ENCODE measurements at regions of chr1 and their contacts with region 1.

Region 1: GRCh38 chr1:112369392-112370285 is 26.4 kb upstream of the CTTNBP2NL start:
- DNase-seq: peak; percentile 88
- H3K4me3 Mint-ChIP-seq: no peak overlapping the region
- H3K27ac Mint-ChIP-seq: no peak overlapping the region
- H3K4me1 Mint-ChIP-seq: no peaks in the 10 kb centered on the region
- H3K27me3 Mint-ChIP-seq: peaks cover 50% of the 10 kb centered on the region

Region 2: DNA sequence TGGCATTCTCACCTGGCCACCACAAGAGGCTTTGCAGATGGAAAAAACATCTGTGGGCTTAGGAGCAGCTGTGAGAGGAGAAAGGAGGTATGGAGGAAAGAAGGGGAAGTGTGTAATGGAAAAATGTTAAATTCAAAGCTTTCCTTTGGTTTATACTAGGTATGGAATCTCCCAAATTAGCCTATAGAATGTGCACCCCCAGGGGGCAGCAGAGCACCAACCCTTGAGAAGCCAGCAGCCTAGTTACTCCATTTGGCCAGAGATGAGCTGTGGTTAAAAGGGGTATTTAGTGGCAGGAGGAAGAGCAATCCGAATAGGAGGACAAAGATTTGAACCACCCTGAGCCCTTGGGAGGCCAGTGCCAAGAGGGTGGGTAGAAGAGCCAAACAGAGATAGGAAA is 71.1 kb before region 1 on chr1:
- CTCF ChIA-PET with region 1: interaction called, 44 read pairs
- DNase-seq: peak; percentile 69
- H3K4me3 Mint-ChIP-seq: no peak overlapping the region
- H3K27ac Mint-ChIP-seq: no peak overlapping the region
- H3K4me1 Mint-ChIP-seq: no peaks in the 10 kb centered on the region
- H3K27me3 Mint-ChIP-seq: peaks cover 8% of the 10 kb centered on the region

Region 3: GRCh38 chr1:112317140-112317539 is 52.5 kb before region 1 on chr1:
- CTCF ChIA-PET with region 1: no interaction called
- DNase-seq: no peak
- H3K4me3 Mint-ChIP-seq: no peak overlapping the region
- H3K27ac Mint-ChIP-seq: no peak overlapping the region
- H3K4me1 Mint-ChIP-seq: no peaks in the 10 kb centered on the region
- H3K27me3 Mint-ChIP-seq: peaks cover 18% of the 10 kb centered on the region

Region 4: DNA sequence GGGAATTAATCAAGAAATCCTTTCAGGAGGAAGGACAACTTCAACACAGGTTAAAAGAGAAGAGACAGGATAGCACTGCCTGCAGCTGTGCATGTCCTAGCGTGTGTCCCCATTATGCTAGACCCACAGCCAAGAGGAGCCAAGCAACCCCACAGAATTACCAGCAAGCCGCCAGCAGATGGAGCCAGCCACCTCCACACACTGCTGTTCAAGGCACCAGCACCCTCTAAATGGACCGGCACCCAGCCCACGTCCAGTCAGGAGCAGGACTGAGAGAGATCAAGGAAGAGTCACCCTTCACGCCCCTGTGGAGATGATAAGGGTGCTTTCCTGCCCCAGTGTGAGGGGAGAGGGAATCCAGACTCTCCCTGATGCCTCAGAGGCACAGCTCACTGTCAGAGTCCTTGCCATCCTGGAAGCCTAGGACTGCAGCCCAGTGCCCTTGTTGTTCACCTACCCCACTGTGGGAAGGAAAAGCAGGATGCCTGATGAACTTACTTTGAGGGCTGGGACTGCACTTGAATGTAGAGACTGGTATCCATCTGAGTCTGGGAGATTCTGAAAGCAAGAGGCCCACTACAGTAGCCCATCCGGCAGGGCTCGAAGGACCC is 10.7 kb before region 1 on chr1:
- CTCF ChIA-PET with region 1: interaction called, 61 read pairs
- DNase-seq: peak; percentile 59
- H3K4me3 Mint-ChIP-seq: no peak overlapping the region
- H3K27ac Mint-ChIP-seq: no peak overlapping the region
- H3K4me1 Mint-ChIP-seq: no peaks in the 10 kb centered on the region
- H3K27me3 Mint-ChIP-seq: peaks cover 45% of the 10 kb centered on the region

Region 5: DNA sequence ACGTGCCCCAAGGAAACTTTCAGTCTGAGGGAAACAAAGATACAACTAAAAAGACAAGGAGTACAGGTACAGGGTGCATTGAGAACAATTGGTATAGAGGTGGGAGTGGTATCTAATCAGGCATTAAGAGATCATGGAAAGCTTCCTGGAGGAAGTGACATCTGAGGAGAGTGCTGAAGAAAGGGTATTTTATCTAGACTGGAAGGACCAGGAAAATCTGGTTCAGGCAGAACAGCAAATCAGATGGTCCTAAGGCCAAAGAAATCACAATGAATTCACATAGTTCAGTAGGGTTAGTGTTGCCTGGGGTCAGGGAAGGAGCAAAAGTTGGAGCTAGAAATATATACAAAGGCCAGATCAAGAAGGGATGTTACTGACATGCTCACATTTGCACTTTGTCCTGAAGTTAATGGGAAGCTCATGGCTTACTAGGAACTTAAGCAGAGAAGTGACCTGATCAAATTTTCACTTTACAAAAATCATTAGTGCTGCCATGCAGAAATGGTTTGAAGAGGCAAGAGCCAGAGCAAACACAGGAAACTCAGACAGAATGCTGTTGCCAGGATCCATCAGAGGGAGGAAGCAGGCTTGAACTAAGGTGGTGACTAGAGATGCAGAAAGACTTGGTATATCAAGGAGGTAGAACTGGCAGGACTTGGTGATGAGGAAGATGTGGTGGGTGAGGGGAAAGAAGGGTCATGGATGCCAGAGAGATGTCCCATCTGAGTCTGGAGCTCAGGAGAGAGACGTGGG is 11.9 kb after region 1 on chr1:
- CTCF ChIA-PET with region 1: interaction called, 14 read pairs
- DNase-seq: no peak
- H3K4me3 Mint-ChIP-seq: no peak overlapping the region
- H3K27ac Mint-ChIP-seq: no peak overlapping the region
- H3K4me1 Mint-ChIP-seq: no peaks in the 10 kb centered on the region
- H3K27me3 Mint-ChIP-seq: peaks cover 26% of the 10 kb centered on the region

Measured in activated naive CD4-positive, alpha-beta T cell treated with anti-CD3 and anti-CD28 coated beads, Interleukin-2, amount 10 ng/mL, durations not matched to agents 7 days and 5 days (primary cell).